CD4-positive, alpha-beta memory T cell (primary cell): ENCODE measurements at regions of chr17 and their contacts with region 1.

Region 1: DNA sequence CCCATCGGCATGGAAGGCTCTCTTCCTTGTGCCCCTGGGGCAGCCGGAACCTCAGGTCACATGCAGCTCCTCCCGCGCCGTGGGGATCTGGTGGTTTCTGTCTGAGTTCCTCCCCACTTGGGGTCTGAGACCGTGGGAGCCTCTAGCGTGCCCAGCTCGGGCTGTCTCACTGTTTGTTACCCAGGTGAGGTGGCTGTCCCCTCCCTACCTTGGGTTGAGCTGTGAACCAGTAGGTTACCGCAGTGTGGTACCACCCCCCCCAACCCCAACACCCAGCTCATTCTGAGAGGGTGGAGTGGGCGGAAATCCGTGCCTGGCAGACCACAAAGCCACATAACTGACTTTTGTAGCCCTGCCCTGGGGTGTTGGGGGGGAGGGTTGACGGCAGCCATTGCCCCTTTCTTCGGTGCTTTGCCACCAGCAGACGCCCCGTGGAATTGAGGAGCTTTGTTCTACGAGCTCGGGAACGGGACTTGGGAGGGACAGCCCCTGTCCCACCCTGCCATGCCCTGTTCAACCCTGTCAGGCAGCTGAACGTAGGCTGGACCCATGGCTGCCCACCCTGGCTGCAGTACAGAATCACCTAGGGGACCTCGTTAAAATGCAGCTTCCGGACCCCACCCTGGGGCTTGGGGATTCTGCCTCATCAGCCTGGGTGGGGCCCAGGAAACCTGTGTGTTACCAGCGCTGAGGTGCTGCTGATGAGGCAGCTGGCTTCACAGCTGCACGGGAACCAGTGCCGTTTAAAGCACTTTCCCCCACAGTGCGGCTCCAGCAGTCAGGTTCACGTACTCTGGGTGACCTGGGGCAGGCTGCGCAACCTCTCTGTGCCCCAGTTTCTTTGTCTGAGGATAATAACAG is 18.5 kb downstream of the RAP1GAP2 start:
- DNase-seq: peak; percentile 98 to 100 (median 98)
- H3K4me3 ChIP-seq: peak overlapping the region; percentile 62 to 74
- H3K4me3 Mint-ChIP-seq: peak overlapping the region; percentile 79 to 87 (median 83)
- H3K27ac ChIP-seq: peak overlapping the region; percentile 57
- H3K27ac Mint-ChIP-seq: peak overlapping the region; percentile 93 to 97 (median 96)
- H3K4me1 ChIP-seq: peaks cover 53% of the 10 kb centered on the region
- H3K4me1 Mint-ChIP-seq: peaks cover 22 to 48% (median 31%) of the 10 kb centered on the region in 4 donors
- H3K27me3 ChIP-seq: no peaks in the 10 kb centered on the region
- H3K27me3 Mint-ChIP-seq: no peaks in the 10 kb centered on the region

Region 2: GRCh38 chr17:2392252-2393173 is 422.2 kb before region 1 on chr17:
- CTCF ChIA-PET with region 1: no interaction called
- POLR2A ChIA-PET with region 1: interaction called, 12 read pairs
- intact Hi-C with region 1: no loop called
- DNase-seq: peak; percentile 95 to 99 (median 98)
- H3K4me3 ChIP-seq: peak overlapping the region; percentile 38 to 91
- H3K4me3 Mint-ChIP-seq: peak overlapping the region; percentile 88 to 98 (median 96)
- H3K27ac ChIP-seq: peak overlapping the region; percentile 100
- H3K27ac Mint-ChIP-seq: peak overlapping the region; percentile 95 to 100 (median 99)
- H3K4me1 ChIP-seq: peaks cover 60% of the 10 kb centered on the region
- H3K4me1 Mint-ChIP-seq: peaks cover 31 to 69% (median 49%) of the 10 kb centered on the region in 4 donors
- H3K27me3 ChIP-seq: no peaks in the 10 kb centered on the region
- H3K27me3 Mint-ChIP-seq: peaks cover 0 to 1% of the 10 kb centered on the region in 2 donors

Region 3: GRCh38 chr17:2656283-2656682 is 158.4 kb before region 1 on chr17:
- CTCF ChIA-PET with region 1: no interaction called
- POLR2A ChIA-PET with region 1: no interaction called
- intact Hi-C with region 1: no loop called
- DNase-seq: no peak
- H3K4me3 ChIP-seq: no peak overlapping the region
- H3K4me3 Mint-ChIP-seq: peak overlapping the region in 1 of 8 donors; percentile 17
- H3K27ac ChIP-seq: no peak overlapping the region
- H3K27ac Mint-ChIP-seq: peak overlapping the region in 4 of 7 donors; percentile 7 to 69 (median 24)
- H3K4me1 ChIP-seq: peaks cover 29% of the 10 kb centered on the region
- H3K4me1 Mint-ChIP-seq: peaks cover 35 to 65% (median 50%) of the 10 kb centered on the region in 4 donors
- H3K27me3 ChIP-seq: no peaks in the 10 kb centered on the region
- H3K27me3 Mint-ChIP-seq: no peaks in the 10 kb centered on the region

Region 4: GRCh38 chr17:2711601-2712299 is 103.0 kb before region 1 on chr17 and contains the start of gene CLUH:
- CTCF ChIA-PET with region 1: no interaction called
- POLR2A ChIA-PET with region 1: interaction called, 5 read pairs
- intact Hi-C with region 1: loop called (anchors 5 kb)
- DNase-seq: peak; percentile 93 to 97 (median 95)
- H3K4me3 ChIP-seq: peak within 1 kb of the TSS; percentile 69 to 77
- H3K4me3 Mint-ChIP-seq: peak within 1 kb of the TSS; percentile 85 to 92 (median 89)
- H3K27ac ChIP-seq: peak within 1 kb of the TSS; percentile 62
- H3K27ac Mint-ChIP-seq: peak within 1 kb of the TSS; percentile 77 to 93 (median 91)
- H3K4me1 ChIP-seq: peaks cover 40% of the 10 kb centered on the region
- H3K4me1 Mint-ChIP-seq: peaks cover 23 to 42% (median 33%) of the 10 kb centered on the region in 4 donors
- H3K27me3 ChIP-seq: no peaks in the 10 kb centered on the region
- H3K27me3 Mint-ChIP-seq: no peaks in the 10 kb centered on the region
- total RNA-seq, gene CLUH: 43.5 to 44.1 TPM

Region 5: DNA sequence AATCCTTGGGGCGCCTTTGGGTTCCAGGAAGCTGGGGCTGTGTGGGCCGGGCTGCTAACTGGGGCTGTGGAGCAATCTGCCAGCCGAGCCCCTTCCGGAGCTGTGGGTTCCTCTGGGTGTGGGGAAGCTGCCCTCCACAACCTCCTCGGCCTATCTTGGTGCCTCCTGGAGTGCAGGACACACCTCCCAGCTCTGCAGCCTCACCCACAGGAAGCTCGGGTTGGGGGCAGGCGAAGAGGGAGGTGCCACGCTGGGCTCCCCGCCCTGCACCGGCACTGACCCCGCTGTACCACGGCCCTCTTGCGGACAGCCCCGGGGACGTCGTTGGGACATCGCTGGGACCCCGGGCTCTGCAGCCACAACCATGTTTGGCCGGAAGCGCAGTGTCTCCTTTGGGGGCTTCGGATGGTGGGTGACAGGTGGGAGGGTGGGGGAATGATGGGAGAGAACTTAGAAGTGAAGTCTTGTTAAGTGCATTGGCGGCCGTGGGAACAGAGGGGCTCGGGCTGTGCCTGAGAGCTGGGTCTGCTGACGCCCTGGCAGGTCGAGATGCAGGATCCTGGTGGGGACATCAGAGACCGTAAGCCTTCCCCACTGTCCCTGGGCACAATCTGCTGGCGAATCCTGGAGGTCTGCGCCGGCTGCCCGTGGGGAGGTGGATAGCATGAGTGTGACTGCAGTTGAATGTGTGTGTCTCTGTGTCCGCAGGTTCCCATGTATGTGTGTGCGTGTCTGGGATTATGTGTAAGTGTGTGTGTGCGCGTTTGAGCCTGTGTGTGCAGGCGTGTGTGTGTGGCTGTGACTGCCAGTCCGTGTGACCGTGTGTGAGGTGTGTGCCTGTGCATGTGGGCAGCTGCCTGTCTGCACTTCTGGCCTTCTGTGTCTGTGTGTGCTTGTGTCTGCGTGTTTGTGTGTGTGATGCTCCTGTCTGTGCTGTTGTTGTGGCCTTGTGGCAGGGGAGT is 18.3 kb before region 1 on chr17 and contains the start of gene RAP1GAP2:
- CTCF ChIA-PET with region 1: interaction called, 75 read pairs
- POLR2A ChIA-PET with region 1: interaction called, 330 read pairs
- intact Hi-C with region 1: loop called (anchors 1 kb)
- DNase-seq: peak; percentile 81 to 89 (median 85)
- H3K4me3 ChIP-seq: peak within 1 kb of the TSS; percentile 83 to 94
- H3K4me3 Mint-ChIP-seq: peak within 1 kb of the TSS; percentile 90 to 99 (median 97)
- H3K27ac ChIP-seq: peak within 1 kb of the TSS; percentile 51
- H3K27ac Mint-ChIP-seq: peak within 1 kb of the TSS; percentile 72 to 94 (median 89)
- H3K4me1 ChIP-seq: peaks cover 80% of the 10 kb centered on the region
- H3K4me1 Mint-ChIP-seq: peaks cover 47 to 88% (median 70%) of the 10 kb centered on the region in 4 donors
- H3K27me3 ChIP-seq: no peaks in the 10 kb centered on the region
- H3K27me3 Mint-ChIP-seq: no peaks in the 10 kb centered on the region
- total RNA-seq, gene RAP1GAP2: 9.0 to 9.9 TPM

Region 6: DNA sequence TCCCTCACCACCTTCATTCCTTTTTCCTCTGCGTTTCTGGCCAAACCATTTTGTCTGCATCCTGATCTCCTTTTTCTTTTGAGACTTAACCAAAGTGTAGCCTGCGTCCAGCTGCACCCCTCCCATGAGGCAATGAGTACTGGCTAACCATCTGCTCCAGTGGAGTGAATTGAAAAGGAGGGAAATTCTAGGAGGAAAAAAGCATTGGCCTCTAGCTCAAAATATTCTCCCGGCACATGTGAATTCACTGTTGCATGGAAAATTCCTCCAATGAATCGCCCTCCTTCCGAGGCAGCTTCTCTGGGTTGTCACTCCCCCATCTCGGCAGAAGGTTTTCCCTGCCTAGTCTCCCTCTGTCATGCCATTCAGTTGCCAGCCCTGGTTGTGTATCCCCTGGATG is 12.9 kb before region 1 on chr17:
- CTCF ChIA-PET with region 1: interaction called, 75 read pairs
- POLR2A ChIA-PET with region 1: interaction called, 330 read pairs
- intact Hi-C with region 1: no loop called
- DNase-seq: no peak
- H3K4me3 ChIP-seq: no peak overlapping the region
- H3K4me3 Mint-ChIP-seq: peak overlapping the region in 1 of 8 donors; percentile 33
- H3K27ac ChIP-seq: no peak overlapping the region
- H3K27ac Mint-ChIP-seq: no peak overlapping the region
- H3K4me1 ChIP-seq: peaks cover 40% of the 10 kb centered on the region
- H3K4me1 Mint-ChIP-seq: peaks cover 34 to 76% (median 48%) of the 10 kb centered on the region in 4 donors
- H3K27me3 ChIP-seq: no peaks in the 10 kb centered on the region
- H3K27me3 Mint-ChIP-seq: no peaks in the 10 kb centered on the region

Region 7: GRCh38 chr17:2828397-2829038 is 13.8 kb after region 1 on chr17:
- CTCF ChIA-PET with region 1: interaction called, 86 read pairs
- POLR2A ChIA-PET with region 1: interaction called, 34 read pairs
- intact Hi-C with region 1: loop called (anchors 1 kb)
- DNase-seq: peak; percentile 67 to 76 (median 71)
- H3K4me3 ChIP-seq: no peak overlapping the region
- H3K4me3 Mint-ChIP-seq: peak overlapping the region in 7 of 8 donors; percentile 42 to 70 (median 57)
- H3K27ac ChIP-seq: no peak overlapping the region
- H3K27ac Mint-ChIP-seq: peak overlapping the region in 5 of 7 donors; percentile 5 to 93 (median 67)
- H3K4me1 ChIP-seq: peaks cover 24% of the 10 kb centered on the region
- H3K4me1 Mint-ChIP-seq: peaks cover 20 to 40% (median 22%) of the 10 kb centered on the region in 4 donors
- H3K27me3 ChIP-seq: no peaks in the 10 kb centered on the region
- H3K27me3 Mint-ChIP-seq: peaks cover 0 to 1% of the 10 kb centered on the region in 2 donors

Region 8: GRCh38 chr17:2837147-2837561 is 22.4 kb after region 1 on chr17:
- CTCF ChIA-PET with region 1: interaction called, 86 read pairs
- POLR2A ChIA-PET with region 1: interaction called, 24 read pairs
- intact Hi-C with region 1: loop called (anchors 1 kb)
- DNase-seq: peak; percentile 48 to 65 (median 61)
- H3K4me3 ChIP-seq: no peak overlapping the region
- H3K4me3 Mint-ChIP-seq: no peak overlapping the region
- H3K27ac ChIP-seq: no peak overlapping the region
- H3K27ac Mint-ChIP-seq: peak overlapping the region in 2 of 7 donors; percentile 19 to 41
- H3K4me1 ChIP-seq: peaks cover 6% of the 10 kb centered on the region
- H3K4me1 Mint-ChIP-seq: peaks cover 7 to 24% (median 12%) of the 10 kb centered on the region in 4 donors
- H3K27me3 ChIP-seq: no peaks in the 10 kb centered on the region
- H3K27me3 Mint-ChIP-seq: no peaks in the 10 kb centered on the region